Dorsolateral prefrontal cortex (tissue), 120 donors: ENCODE measurements at regions of chr2 and their contacts with region 1.

Region 1: GRCh38 chr2:130355578-130356431 is at the start of gene PTPN18:
- DNase-seq: peak; percentile 78 to 94 (median 86)
- H3K4me3 ChIP-seq: peak within 1 kb of the TSS; percentile 55 to 93 (median 83)
- H3K27ac ChIP-seq: peak within 1 kb of the TSS in 56 of 59 donors; percentile 3 to 89 (median 72)
- H3K27me3 ChIP-seq: no peaks in the 10 kb centered on the region
- CTCF ChIP-seq: peak in 55 of 56 donors; percentile 14 to 85 (median 61)
- total RNA-seq, gene PTPN18: 25.5 to 68.8 (median 49.6) TPM

Region 2: DNA sequence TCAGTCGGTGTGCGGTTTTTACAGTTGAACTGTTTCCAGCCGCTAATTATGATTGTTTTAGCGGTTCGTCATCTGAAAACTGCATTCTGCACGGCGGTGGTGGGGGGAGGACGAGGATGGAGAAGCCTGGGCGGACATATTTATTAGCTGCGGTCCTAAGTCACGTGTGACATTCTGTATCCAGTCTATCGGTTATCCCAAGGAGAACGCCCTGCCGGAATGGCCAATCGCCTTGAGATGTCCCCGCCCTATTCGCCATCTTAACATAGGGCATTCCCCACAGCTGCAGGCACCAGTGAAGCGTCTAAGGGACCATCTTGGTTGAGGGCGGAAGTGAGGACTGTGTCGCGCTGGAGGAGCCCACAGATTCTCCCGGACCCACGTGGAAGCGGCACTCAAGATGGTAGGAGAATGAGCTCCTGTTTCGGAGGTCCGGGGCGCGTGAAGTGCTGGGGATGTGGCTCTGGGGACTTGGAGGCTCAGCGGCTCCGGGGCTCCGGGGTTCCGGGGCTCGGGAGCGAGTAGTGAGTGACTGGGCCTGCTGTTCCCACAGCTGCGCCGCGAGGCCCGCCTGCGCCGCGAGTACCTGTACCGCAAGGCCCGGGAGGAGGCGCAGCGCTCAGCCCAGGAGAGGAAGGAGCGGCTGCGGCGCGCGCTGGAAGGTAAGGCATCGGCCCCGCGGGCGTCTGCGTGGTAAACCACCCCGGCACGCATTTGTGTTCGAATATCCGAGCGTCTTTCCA is 13.1 kb before region 1 on chr2 and contains the start of gene IMP4:
- intact Hi-C with region 1: loop called in 1 of 2 experiments (anchors 2 kb)
- DNase-seq: peak; percentile 91 to 100 (median 99)
- H3K4me3 ChIP-seq: peak within 1 kb of the TSS; percentile 69 to 100 (median 94)
- H3K27ac ChIP-seq: peak within 1 kb of the TSS; percentile 72 to 99 (median 96)
- H3K27me3 ChIP-seq: no peaks in the 10 kb centered on the region
- CTCF ChIP-seq: peak in 36 of 56 donors; percentile 2 to 49 (median 24)
- total RNA-seq, gene IMP4: 46.3 to 91.5 (median 67.1) TPM

Region 3: DNA sequence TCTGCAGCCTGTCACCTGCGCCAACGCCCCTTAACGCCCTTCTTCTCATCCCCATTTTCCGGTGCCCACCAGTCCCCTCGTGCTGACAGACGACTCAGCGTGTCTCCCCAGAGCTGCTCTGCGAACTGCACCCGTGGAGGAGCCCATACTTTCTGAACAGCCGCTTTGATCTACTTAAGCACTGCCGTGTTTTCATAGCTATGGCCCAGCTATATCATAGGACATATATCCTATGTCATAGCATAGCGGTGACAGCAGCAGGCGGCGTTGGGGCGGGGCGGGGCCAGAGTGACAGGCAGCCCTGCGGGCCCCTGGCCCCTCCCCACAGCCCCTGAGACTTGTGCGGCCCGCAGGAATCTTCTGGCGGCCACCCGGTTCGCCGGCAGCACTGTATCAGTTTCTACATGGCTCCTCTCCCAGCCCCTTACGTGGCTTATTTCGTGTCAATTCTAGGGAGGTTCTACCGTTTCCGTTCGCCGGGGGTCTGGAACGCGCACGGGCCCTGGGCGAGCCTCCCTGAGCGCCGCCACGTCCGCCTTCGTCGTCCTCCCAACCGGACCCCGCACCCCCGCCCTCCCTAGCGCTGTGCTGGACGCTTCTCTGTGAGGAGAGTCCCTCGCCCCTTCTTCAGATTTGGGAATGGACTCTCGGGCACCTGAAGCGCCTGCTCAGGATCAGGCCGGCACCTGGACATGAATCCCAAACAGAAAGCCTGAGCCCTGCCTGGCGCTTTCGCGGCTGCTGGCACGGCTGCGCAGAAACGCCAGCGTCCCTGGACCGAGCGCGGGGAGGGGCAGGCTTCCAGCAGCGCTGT is 35.5 kb after region 1 on chr2:
- intact Hi-C with region 1: loop called in 1 of 2 experiments (anchors 5 kb)
- DNase-seq: peak; percentile 67 to 93 (median 87)
- H3K4me3 ChIP-seq: peak overlapping the region; percentile 53 to 90 (median 78)
- H3K27ac ChIP-seq: peak overlapping the region in 58 of 59 donors; percentile 62 to 97 (median 91)
- H3K27me3 ChIP-seq: no peaks in the 10 kb centered on the region
- CTCF ChIP-seq: peak in 11 of 56 donors; percentile 3 to 51 (median 9)